Activated CD8-positive, alpha-beta T cell treated with anti-CD3 and anti-CD28 coated beads, Interleukin-2, amount 10 ng/mL, durations not matched to agents 7 days and 5 days (primary cell): ENCODE measurements at regions of chr19 and their contacts with region 1.

Region 1: DNA sequence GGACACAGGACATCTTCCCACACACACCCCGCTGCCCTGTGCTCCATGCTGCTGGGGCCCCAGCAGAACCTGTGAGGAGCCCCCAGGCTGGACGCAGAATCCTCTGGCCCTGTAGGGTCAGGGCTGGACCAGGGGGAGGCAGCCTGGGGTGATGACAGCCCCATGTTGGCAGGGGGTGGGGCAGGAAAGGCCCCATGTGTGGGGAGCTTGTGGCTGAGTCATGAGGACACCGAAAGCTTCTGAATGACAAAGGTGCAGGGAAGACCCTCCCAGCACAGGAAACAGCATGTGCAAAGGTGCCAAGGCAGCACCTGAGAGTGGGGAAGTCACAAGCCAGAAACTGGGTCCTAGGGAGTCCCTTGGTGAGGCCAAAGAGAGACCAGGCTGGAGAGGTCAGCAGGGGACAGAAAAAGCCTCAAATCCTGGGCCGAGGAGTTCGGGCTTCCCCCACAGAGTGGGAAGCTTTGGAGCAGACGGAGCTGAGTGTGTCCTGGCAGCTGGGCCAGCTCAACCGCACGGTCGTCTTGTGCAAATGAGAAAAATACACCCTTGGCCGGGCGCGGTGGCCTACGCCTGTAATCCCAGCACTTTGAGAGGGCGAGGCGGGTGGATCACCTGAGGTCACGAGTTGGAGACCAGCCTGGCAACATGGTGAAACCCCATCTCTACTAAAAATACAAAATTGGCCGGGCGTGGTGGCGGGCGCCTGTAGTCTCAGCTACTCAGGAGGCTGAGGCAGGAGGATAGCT is 17.5 kb downstream of the ATP8B3 start:
- DNase-seq: no peak
- ATAC-seq: no peak
- H3K4me3 Mint-ChIP-seq: no peak overlapping the region
- H3K27ac Mint-ChIP-seq: no peak overlapping the region
- H3K4me1 Mint-ChIP-seq: peaks cover 2% of the 10 kb centered on the region
- H3K27me3 Mint-ChIP-seq: no peaks in the 10 kb centered on the region

Region 2: DNA sequence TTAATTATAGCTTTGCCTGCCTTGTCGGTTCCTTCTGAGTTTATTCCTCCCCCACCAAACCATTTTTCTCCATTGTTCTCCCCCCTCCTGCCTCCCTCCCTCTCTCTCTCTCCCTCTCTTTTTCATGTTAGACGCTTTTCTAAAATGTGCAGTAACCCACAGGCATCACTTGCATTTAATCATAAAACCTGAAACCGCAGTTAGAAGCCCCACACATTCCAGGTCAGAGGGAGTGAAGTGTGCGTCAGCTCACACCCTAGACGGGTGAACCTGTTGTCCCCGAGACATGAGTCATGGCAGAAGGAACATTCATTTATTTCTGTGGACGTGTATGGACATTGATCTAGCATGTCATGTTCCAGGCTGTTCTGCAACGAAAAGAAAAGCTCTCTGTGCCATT is 21.4 kb before region 1 on chr19:
- CTCF ChIA-PET with region 1: interaction called, 11 read pairs
- POLR2A ChIA-PET with region 1: interaction called, 3 read pairs
- DNase-seq: no peak
- ATAC-seq: no peak
- H3K4me3 Mint-ChIP-seq: no peak overlapping the region
- H3K27ac Mint-ChIP-seq: no peak overlapping the region
- H3K4me1 Mint-ChIP-seq: no peaks in the 10 kb centered on the region
- H3K27me3 Mint-ChIP-seq: peaks cover 51% of the 10 kb centered on the region

Region 3: DNA sequence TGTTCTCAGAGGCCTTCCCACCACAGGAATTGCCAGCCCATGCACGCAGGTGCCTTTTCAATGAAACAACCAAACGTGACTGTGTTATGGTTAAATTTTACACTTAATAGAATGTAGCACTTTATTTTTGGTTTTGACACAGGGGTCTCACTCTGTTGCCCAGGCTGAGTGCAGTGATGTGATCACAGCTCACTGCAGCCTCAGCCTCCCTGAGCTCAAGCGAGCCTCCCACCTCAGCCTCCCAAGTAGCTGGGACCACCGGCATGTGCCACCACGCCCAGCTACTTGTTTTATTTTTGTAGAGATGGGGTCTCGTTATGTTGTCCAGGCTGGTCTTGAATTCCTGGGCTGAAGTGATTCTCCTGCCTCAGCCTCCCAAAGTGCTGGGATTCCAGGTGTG is 10.3 kb after region 1 on chr19:
- CTCF ChIA-PET with region 1: no interaction called
- POLR2A ChIA-PET with region 1: no interaction called
- DNase-seq: no peak
- ATAC-seq: no peak
- H3K4me3 Mint-ChIP-seq: no peak overlapping the region
- H3K27ac Mint-ChIP-seq: no peak overlapping the region
- H3K4me1 Mint-ChIP-seq: no peaks in the 10 kb centered on the region
- H3K27me3 Mint-ChIP-seq: no peaks in the 10 kb centered on the region

Region 4: GRCh38 chr19:1819341-1820275 is 25.0 kb after region 1 on chr19:
- CTCF ChIA-PET with region 1: no interaction called
- POLR2A ChIA-PET with region 1: no interaction called
- DNase-seq: no peak
- ATAC-seq: no peak
- H3K4me3 Mint-ChIP-seq: no peak overlapping the region
- H3K27ac Mint-ChIP-seq: no peak overlapping the region
- H3K4me1 Mint-ChIP-seq: no peaks in the 10 kb centered on the region
- H3K27me3 Mint-ChIP-seq: no peaks in the 10 kb centered on the region